GM18951 (cell line): ENCODE measurements at regions of chr1 and their contacts with region 1.

Region 1: DNA sequence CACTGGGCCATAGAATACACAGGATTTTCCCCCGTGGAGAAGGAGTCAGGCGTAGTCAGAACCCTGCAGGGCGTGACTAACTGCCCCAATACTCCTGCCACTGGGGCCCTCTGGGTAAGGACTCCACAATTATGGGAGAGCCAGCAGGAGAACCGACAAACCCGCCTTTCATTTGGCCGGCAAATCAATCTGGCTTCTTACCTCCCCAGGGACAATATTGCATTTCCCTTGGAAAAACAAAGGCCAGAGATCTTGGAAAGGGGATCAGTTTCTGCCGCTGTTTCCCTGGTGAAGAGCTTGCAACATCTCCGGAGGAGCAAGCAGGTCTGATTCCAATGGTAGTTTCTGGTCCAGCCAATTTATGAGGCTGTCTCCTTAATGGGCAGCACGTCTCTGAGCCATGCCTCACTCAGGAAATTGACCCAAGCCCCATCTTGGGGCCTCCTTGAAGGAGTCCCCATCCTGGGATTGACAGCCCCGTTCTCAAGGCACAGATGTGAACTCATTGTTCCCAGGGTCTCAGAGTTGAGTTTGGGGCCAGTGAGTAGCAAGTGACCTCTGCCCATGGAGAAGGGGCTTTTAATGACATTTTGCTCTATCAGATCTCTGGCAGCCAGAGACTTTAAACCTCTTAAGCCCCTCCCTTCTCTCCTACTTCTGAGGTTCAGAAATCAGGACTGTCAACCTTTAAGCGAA is 4.3 kb downstream of the TRABD2B start:
- POLR2A ChIP-seq: no peak

Region 2: GRCh38 chr1:47927165-47927564 is 65.7 kb before region 1 on chr1:
- in situ Hi-C with region 1: loop called (anchors 5 kb)
- POLR2A ChIP-seq: no peak